Activated CD4-positive, alpha-beta memory T cell treated with anti-CD3 and anti-CD28 coated beads for 36 hours (primary cell): ENCODE measurements at regions of chr17 and their contacts with region 1.

Region 1: GRCh38 chr17:2029911-2030778 is at the start of gene DPH1:
- DNase-seq: peak; percentile 92
- H3K4me3 Mint-ChIP-seq: peak within 1 kb of the TSS; percentile 95
- H3K27ac Mint-ChIP-seq: peak within 1 kb of the TSS; percentile 67
- H3K4me1 Mint-ChIP-seq: peaks cover 15% of the 10 kb centered on the region
- H3K27me3 Mint-ChIP-seq: peaks cover 22% of the 10 kb centered on the region
- total RNA-seq, gene DPH1: 29.4 to 31.1 TPM

Region 2: DNA sequence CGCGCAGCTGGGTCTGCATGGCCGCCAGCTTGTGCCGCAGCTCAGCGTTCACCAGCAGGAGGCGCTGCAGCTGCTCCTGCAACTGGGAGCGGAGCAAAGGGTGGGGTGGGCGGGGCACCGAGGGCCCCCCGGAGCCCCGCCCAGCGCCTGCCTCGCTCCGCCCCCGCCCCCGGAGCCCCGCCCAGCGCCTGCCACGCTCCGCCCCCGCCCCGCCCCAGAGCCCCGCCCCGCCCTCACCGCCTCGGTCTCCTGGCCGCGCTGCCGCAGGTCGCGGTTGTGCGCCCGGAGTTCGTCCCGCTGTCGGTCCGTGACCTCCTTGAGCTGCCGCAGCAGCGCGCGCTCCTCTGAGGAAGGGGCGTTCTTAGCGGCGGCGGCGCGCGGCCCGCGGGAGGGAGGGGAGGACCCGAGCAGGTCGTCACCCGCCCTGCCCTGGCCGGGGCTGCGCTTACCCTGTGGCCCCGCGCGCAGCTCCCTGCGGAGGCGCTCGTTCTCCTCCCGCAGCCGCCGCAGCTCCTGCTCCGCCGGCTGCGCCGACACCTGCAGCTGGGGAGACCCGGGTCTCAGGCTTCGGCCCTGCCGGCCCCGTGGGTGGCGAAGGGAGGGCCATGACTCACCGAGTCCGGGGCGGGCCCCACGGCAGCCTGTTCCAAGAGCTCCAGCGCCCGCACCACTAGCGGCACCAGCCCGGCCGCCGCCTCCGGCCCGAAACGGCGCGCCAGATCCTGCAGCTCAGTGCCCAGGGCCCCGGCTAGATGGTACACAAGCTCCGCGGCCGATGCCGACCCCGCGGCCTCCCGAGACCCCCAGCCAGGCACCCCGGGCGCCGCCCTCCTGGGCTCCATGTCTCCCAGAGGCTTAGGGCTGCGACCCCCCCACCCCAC is 380.9 kb before region 1 on chr17:
- CTCF ChIA-PET with region 1: interaction called, 3 read pairs
- POLR2A ChIA-PET with region 1: no interaction called
- intact Hi-C with region 1: loop called (anchors 10 kb)
- DNase-seq: peak; percentile 95
- H3K4me3 Mint-ChIP-seq: peak overlapping the region; percentile 54
- H3K27ac Mint-ChIP-seq: no peak overlapping the region
- H3K4me1 Mint-ChIP-seq: peaks cover 26% of the 10 kb centered on the region
- H3K27me3 Mint-ChIP-seq: no peaks in the 10 kb centered on the region

Region 3: DNA sequence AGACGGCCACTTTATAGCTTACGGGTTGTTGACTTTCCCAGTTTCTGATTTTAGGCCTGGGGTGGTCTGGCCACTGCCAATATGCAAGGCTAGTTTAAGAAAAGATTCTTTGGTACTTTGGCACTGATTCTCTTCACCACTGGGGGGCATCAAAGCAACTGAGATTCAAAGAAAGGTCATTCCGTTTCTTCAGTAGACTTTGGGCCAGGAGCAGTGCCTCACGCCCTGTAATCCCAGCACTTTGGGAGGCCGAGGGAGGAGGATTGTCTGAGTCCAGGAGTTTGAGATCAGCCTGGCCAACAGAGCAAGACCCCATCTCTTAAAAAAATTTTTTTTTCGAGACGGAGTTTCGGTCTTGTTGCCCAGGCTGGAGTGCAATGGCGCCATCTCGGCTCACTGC is 147.3 kb before region 1 on chr17:
- CTCF ChIA-PET with region 1: interaction called, 5 read pairs
- POLR2A ChIA-PET with region 1: no interaction called
- intact Hi-C with region 1: loop called (anchors 10 kb)
- DNase-seq: peak; percentile 20
- H3K4me3 Mint-ChIP-seq: no peak overlapping the region
- H3K27ac Mint-ChIP-seq: no peak overlapping the region
- H3K4me1 Mint-ChIP-seq: no peaks in the 10 kb centered on the region
- H3K27me3 Mint-ChIP-seq: no peaks in the 10 kb centered on the region

Region 4: GRCh38 chr17:1908699-1909309 is 121.3 kb before region 1 on chr17:
- CTCF ChIA-PET with region 1: interaction called, 23 read pairs
- POLR2A ChIA-PET with region 1: no interaction called
- intact Hi-C with region 1: loop called (anchors 2 kb)
- DNase-seq: peak; percentile 58
- H3K4me3 Mint-ChIP-seq: no peak overlapping the region
- H3K27ac Mint-ChIP-seq: no peak overlapping the region
- H3K4me1 Mint-ChIP-seq: peaks cover 7% of the 10 kb centered on the region
- H3K27me3 Mint-ChIP-seq: peaks cover 45% of the 10 kb centered on the region

Region 5: DNA sequence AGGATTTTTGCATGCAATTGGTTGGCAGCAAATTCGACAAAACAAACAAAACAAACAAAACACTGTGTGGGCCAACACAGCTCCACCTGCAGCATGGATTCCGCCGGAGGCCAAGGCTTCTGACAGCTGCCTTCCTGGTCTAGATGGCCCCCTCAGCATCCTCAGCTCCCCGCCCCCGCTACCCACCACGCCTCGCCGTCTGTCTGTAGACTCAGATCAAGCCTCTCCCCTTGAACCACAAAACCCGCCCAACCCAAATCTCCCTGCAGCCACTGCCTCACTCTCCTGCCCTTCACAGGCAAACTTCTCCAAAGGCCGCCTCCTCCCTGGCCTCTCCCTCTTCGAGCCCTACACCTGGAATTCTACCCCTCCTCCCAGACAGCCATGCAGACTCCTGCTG is 62.9 kb before region 1 on chr17:
- CTCF ChIA-PET with region 1: no interaction called
- POLR2A ChIA-PET with region 1: no interaction called
- intact Hi-C with region 1: no loop called
- DNase-seq: peak; percentile 16
- H3K4me3 Mint-ChIP-seq: no peak overlapping the region
- H3K27ac Mint-ChIP-seq: no peak overlapping the region
- H3K4me1 Mint-ChIP-seq: no peaks in the 10 kb centered on the region
- H3K27me3 Mint-ChIP-seq: peaks cover 23% of the 10 kb centered on the region

Region 6: GRCh38 chr17:2041561-2042366 is 11.6 kb after region 1 on chr17 and contains the start of gene OVCA2:
- CTCF ChIA-PET with region 1: interaction called, 3 read pairs
- POLR2A ChIA-PET with region 1: interaction called, 3 read pairs
- intact Hi-C with region 1: loop called (anchors 1 kb)
- DNase-seq: peak; percentile 98
- H3K4me3 Mint-ChIP-seq: peak within 1 kb of the TSS; percentile 96
- H3K27ac Mint-ChIP-seq: peak within 1 kb of the TSS; percentile 97
- H3K4me1 Mint-ChIP-seq: peaks cover 23% of the 10 kb centered on the region
- H3K27me3 Mint-ChIP-seq: no peaks in the 10 kb centered on the region
- total RNA-seq, gene OVCA2: 31.7 to 34.8 TPM

Region 7: GRCh38 chr17:2179615-2180295 is 149.6 kb after region 1 on chr17:
- CTCF ChIA-PET with region 1: no interaction called
- POLR2A ChIA-PET with region 1: no interaction called
- intact Hi-C with region 1: no loop called
- DNase-seq: no peak
- H3K4me3 Mint-ChIP-seq: no peak overlapping the region
- H3K27ac Mint-ChIP-seq: no peak overlapping the region
- H3K4me1 Mint-ChIP-seq: no peaks in the 10 kb centered on the region
- H3K27me3 Mint-ChIP-seq: no peaks in the 10 kb centered on the region